ENCODE measurements at regions of chr20 and their contacts with region 1.

Region 1: DNA sequence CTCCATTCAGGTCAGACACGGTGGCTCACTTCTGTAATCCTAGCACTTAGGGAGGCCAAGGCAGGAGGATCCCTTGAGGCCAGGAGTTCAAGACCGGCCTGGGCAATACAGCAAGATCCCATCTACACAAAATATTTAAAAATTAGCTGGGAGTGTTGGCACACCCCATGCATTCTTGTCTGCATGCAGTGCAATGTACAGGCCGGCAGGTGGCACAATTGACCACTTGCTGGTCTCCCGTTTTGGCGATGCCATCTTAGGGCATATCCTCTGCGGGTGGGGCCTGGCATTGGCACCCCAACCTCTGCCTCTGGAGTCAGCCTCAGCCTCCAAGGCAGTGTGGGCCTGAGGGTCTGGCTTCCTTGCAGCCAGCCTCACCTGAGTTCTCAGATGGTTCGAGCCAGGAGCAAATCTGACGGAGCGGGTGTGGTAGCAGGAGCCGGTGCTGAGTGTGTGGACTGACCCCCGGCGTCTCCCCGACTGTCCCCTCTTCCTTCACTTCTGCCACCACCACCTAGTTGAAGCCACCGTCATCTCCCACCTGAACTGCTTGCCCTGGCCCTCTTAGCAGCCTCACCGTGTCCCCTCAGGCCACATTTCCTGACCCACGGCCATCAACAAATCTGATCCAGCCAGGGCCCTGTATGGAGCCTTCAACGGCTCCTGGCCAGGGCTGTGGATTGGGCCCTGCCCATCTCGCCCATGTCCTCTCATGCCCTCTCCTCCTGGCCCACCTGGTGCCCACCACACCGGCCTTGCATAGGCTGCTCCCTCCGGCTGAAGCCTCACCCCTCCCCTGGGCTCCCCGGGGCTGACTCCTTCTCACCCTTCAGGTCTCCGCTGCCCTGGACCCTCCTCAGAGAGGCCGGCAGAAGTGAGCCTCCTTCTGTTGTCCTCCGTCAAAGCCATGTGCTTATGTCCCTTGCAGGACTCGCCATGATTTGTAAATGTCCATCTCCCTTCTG is 44.0 kb downstream of the EFCAB8 start:
- DNase-seq: peak; percentile 79
- H3K4me3 Mint-ChIP-seq: no peak overlapping the region
- H3K27ac Mint-ChIP-seq: no peak overlapping the region
- H3K4me1 Mint-ChIP-seq: peaks cover 16% of the 10 kb centered on the region
- H3K27me3 Mint-ChIP-seq: no peaks in the 10 kb centered on the region

Region 2: DNA sequence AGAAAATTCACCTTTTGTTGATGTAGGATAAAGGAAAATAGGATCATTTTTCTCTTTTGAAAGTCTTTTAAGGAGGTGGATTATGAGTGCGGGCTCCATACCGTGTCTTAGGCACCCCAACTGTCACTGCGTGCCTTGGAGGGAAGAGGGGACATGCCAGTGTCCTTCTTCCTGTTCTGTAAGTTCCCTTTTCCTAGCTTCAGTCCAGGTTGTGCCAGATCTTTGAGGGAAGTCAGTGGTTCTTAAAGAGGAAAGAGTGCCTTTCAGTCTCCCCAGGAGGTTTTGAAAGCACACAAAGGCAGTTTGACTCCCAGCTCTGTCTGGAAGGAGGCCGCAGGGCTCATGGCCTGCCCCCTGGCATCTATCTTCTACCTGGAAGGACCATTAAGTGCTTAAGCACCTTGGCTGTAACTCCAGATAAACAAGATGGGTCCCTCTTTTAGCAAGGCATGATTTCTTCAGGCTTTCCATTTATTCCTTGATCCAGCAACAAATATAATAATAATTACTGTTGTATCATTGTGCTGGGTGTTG is 31.0 kb before region 1 on chr20:
- CTCF ChIA-PET with region 1: no interaction called
- POLR2A ChIA-PET with region 1: no interaction called
- intact Hi-C with region 1: no loop called
- DNase-seq: no peak
- H3K4me3 Mint-ChIP-seq: no peak overlapping the region
- H3K27ac Mint-ChIP-seq: no peak overlapping the region
- H3K4me1 Mint-ChIP-seq: no peaks in the 10 kb centered on the region
- H3K27me3 Mint-ChIP-seq: no peaks in the 10 kb centered on the region

Region 3: DNA sequence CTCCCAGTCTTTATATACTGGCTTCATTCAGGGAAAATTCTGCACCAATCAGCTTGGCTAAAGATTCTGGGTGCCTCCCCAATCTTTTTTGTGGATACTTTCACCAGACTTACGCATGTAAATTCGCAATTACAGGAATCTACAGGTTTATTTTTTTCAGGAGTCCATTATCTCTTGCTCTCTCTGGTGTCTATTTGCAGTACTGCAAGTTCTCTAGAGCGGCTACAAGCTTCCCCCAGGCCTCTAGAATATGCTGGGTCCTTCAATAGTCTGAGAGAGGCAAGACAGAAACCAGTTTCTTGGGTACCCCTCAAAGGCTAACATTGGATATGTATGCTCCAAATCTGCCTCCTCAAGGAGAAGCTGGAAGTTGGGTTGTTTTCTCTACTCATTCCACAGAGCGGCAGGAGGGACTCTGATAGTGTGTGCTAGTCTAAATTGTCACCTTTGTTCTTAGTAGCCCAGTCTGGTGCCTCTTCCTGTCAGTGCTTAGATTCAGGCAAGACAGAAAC is 43.0 kb after region 1 on chr20:
- CTCF ChIA-PET with region 1: interaction called, 41 read pairs
- POLR2A ChIA-PET with region 1: no interaction called
- intact Hi-C with region 1: loop called (anchors 1 kb)
- DNase-seq: peak; percentile 32
- H3K4me3 Mint-ChIP-seq: peak overlapping the region; percentile 14
- H3K27ac Mint-ChIP-seq: peak overlapping the region; percentile 86
- H3K4me1 Mint-ChIP-seq: peaks cover 39% of the 10 kb centered on the region
- H3K27me3 Mint-ChIP-seq: no peaks in the 10 kb centered on the region

Region 4: DNA sequence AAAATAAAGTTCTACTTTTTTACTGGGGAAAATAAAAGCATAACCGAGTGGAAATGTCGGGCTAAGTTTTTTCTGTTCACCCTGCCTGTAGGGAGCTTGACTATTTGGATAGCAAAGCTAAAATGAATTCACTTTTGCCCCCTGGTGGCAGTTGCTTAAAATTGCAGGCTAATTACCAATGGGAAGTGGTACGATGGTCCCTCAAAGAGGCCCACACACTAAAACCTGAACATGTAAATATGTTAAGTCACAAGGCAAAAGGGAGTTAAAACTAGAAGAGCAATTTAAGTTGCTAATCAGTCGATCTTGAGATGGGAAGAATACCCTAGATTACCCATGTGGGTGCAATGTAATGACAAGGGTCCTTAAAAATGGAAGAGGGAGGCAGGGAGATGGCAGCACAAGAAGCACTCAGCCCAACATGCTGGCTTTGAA is 102.4 kb after region 1 on chr20:
- CTCF ChIA-PET with region 1: interaction called, 64 read pairs
- POLR2A ChIA-PET with region 1: interaction called, 3 read pairs
- intact Hi-C with region 1: loop called (anchors 1 kb)
- DNase-seq: peak; percentile 25
- H3K4me3 Mint-ChIP-seq: no peak overlapping the region
- H3K27ac Mint-ChIP-seq: no peak overlapping the region
- H3K4me1 Mint-ChIP-seq: peaks cover 10% of the 10 kb centered on the region
- H3K27me3 Mint-ChIP-seq: no peaks in the 10 kb centered on the region

Region 5: DNA sequence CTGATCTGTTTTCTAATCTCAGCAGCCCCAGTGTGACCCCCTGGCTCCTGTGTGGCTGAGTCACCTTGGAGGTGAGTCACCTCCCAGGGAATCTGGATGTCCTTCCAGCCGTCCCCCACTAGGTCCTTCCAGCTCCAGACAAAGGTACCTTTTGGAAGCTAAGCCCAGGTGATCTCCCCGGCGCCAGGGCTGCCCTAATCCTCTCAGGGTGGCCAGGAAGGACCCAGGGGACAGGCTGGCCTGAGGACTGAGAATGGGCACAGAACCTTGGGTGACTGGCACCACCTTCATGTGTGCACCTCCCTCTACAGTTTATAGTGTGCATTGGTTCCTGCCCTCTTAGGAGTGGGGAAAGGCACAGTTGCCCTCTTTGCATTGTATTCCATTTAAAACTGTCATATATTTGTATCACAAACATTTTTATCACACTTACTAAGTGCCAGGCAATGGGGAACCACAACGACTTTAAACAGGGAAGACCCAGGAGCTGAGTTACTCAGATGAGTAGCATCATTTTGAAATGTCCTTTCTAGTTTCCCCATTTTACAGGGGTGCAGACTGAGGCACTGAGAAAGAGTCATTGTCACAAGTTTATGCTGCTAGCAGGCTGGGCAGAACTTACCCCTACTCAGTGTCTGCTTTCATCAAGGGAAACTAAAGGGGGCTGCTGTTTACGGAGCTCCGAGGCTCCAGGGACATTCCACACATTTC is 174.1 kb after region 1 on chr20:
- CTCF ChIA-PET with region 1: interaction called, 3 read pairs
- POLR2A ChIA-PET with region 1: no interaction called
- intact Hi-C with region 1: loop called (anchors 5 kb)
- DNase-seq: peak; percentile 18
- H3K4me3 Mint-ChIP-seq: no peak overlapping the region
- H3K27ac Mint-ChIP-seq: no peak overlapping the region
- H3K4me1 Mint-ChIP-seq: peaks cover 3% of the 10 kb centered on the region
- H3K27me3 Mint-ChIP-seq: no peaks in the 10 kb centered on the region

Region 6: DNA sequence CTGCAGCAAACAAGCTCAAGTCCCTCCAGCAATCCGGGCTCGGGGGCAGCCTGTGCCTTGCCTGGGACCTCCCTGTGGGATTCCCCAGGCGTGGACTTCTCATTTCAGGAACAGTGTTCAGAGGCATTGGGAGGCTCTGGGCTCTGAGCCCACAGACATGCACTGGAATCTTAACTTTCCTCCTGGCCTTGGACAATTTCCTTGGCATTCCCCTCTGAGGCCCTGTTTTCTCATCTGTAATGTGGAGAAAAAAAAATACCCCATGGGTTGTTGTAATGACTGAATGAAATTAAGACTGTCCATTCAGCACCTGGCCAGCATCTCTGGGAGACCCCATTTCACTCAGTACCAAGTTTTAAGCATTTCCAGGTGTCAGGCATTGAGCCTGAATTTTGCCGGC is 194.3 kb after region 1 on chr20:
- CTCF ChIA-PET with region 1: interaction called, 25 read pairs
- POLR2A ChIA-PET with region 1: no interaction called
- intact Hi-C with region 1: loop called (anchors 1 kb)
- DNase-seq: no peak
- H3K4me3 Mint-ChIP-seq: no peak overlapping the region
- H3K27ac Mint-ChIP-seq: no peak overlapping the region
- H3K4me1 Mint-ChIP-seq: peaks cover 2% of the 10 kb centered on the region
- H3K27me3 Mint-ChIP-seq: no peaks in the 10 kb centered on the region

Region 7: GRCh38 chr20:33291830-33292355 is 389.2 kb after region 1 on chr20:
- CTCF ChIA-PET with region 1: interaction called, 18 read pairs
- POLR2A ChIA-PET with region 1: no interaction called
- intact Hi-C with region 1: no loop called
- DNase-seq: peak; percentile 76
- H3K4me3 Mint-ChIP-seq: no peak overlapping the region
- H3K27ac Mint-ChIP-seq: no peak overlapping the region
- H3K4me1 Mint-ChIP-seq: no peaks in the 10 kb centered on the region
- H3K27me3 Mint-ChIP-seq: no peaks in the 10 kb centered on the region

Region 8: DNA sequence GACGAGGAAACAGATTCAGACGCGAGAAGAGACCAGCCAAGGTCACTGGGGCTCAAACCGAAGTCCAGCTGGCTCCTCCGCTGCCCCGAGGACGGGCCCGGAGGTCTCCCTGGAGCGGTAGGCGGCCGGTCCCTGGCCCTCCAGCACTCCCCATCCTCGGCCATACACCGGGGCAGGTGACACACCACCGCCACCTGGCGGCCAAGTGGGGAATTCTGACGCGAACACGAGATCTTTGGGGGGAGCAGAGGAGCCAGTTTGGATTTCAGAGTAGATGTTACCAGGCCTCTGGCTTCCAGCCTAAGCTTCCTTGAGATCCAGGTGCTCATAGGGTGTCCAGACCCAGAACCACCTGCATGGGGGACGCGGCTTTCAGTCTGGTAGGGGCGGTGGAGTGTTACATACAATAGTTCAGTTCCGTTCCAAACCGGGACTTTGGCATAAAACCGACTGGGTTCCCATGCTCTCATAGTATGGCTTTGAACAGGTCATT is 396.4 kb after region 1 on chr20:
- CTCF ChIA-PET with region 1: interaction called, 10 read pairs
- POLR2A ChIA-PET with region 1: no interaction called
- intact Hi-C with region 1: no loop called
- DNase-seq: peak; percentile 80
- H3K4me3 Mint-ChIP-seq: no peak overlapping the region
- H3K27ac Mint-ChIP-seq: no peak overlapping the region
- H3K4me1 Mint-ChIP-seq: no peaks in the 10 kb centered on the region
- H3K27me3 Mint-ChIP-seq: peaks cover 9% of the 10 kb centered on the region